AG04449 (cell line): ENCODE measurements at regions of chr15 and their contacts with region 1.

Region 1: DNA sequence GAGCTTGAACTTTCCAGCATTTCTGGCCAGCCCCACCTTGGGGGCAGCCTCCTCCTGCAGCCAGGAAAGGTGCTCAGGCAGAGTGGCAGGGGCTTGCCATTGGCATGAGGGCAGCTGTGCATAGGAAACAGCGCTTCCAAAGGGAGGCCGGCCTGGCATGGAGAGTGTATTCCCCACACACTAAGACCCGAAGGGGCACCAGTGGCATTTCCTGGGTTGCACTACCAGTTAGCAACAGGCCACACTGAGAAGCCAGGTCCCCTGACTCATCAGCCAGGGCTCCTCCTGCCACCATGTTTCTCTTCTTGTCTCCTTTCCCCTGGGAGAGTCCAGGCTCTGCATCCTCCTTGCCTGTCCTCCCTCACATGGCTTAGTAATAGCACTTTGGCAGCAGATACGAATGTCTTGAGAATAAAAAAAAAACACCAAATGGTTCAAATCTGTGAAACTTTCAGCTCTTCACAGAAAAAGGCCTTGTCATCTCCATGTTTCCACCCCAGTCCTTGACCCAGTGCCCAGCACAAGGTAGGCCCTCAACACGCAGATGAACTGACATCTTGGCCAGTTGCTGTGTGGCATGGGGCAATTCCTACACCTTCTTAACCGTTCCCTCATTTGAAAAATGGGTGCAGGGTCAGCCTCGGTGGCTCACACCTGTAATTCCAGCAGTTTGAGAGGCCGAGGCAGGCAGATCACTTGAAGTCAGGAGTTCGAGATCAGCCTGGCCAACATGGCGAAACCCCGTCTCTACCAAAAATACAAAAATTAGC is 180.4 kb downstream of the SMAD6 start:
- DNase-seq: no peak
- H3K4me3 ChIP-seq: no peak overlapping the region
- CTCF ChIP-seq: no peak

Region 2: GRCh38 chr15:66802087-66803001 is 80.1 kb before region 1 on chr15:
- CTCF ChIA-PET with region 1: no interaction called
- POLR2A ChIA-PET with region 1: no interaction called
- DNase-seq: no peak
- H3K4me3 ChIP-seq: peak overlapping the region; percentile 24
- CTCF ChIP-seq: no peak

Region 3: GRCh38 chr15:66894986-66895780 is 12.7 kb after region 1 on chr15:
- CTCF ChIA-PET with region 1: interaction called, 14 read pairs
- POLR2A ChIA-PET with region 1: interaction called, 5 read pairs
- DNase-seq: no peak
- H3K4me3 ChIP-seq: no peak overlapping the region
- CTCF ChIP-seq: no peak

Region 4: DNA sequence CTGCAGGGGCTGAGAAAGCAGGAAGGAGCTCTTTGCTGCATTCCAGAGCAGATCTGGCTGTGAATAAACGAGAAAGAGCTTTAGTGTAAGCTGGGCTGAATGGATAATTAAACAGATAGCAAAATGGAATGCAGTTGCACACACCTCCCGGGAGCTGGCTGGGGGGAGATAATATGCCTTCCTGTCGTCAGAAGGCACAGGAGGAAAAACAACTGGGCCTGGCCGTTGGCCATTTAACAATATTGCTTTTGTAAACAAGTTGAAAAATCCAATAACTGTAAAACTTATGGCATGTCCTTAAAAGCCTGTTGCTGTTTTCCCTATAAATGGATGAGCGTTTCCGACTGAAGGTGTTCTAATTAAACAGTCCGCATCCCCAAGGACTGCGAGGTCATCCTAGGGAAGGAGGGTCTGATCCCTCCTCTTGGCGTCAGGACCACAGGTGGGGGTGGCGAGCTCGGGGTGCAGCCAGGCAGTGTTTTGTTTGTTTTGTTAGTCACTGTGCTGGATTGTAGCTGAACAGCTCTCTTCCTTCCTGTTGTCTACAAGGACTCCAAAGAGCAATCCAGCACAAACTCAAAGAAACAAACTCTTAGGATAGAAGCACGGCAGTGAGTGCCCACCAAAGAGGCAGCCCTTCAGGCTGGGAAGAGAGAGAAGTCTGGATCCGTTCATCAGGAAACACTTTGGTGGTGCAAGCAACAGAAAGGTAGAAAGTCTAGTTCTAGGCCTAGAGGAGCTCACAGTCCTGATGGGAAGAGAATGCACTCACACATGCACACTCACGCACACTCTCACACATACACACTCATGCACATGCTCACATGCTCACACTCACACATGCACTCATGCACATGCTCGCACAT is 49.6 kb after region 1 on chr15:
- CTCF ChIA-PET with region 1: no interaction called
- POLR2A ChIA-PET with region 1: no interaction called
- DNase-seq: no peak
- H3K4me3 ChIP-seq: peak overlapping the region; percentile 13
- CTCF ChIP-seq: no peak

Region 5: GRCh38 chr15:67290319-67290718 is 407.9 kb after region 1 on chr15:
- CTCF ChIA-PET with region 1: no interaction called
- POLR2A ChIA-PET with region 1: no interaction called
- DNase-seq: no peak
- H3K4me3 ChIP-seq: no peak overlapping the region
- CTCF ChIP-seq: no peak